ENCODE measurements at regions of chr7 and their contacts with region 1.

Region 1: GRCh38 chr7:44541028-44541869 is at the start of gene NPC1L1:
- DNase-seq: no peak
- ATAC-seq: no peak
- H3K4me3 ChIP-seq: no peak within 1 kb of the TSS
- H3K27ac ChIP-seq: no peak within 1 kb of the TSS
- H3K4me1 ChIP-seq: no peaks in the 10 kb centered on the region
- H3K27me3 ChIP-seq: no peaks in the 10 kb centered on the region
- CTCF ChIP-seq: no peak
- total RNA-seq, gene NPC1L1: 0.24 to 0.28 TPM in 2 of 4 donors, not detected in the others

Region 2: DNA sequence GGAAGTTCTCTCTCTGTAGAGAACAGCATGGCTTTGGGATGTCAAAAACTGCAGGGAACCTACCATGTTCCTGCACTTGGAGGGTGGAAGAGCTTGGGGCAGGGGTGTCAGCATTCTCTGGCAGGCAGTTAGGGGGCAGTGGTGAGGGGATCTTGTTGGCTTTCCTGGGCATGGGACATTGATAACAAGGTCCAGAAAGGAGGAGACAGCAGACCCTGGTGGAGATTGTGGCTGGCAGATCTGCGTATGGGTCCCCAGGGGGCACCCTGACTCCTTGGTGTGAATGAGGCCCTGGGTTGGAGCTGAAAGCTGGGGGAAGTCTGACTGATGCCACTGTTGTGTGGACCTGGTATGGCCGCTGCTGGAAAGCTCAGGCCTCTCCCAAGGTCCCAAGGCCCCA is 192.9 kb before region 1 on chr7:
- intact Hi-C with region 1: loop called in 1 of 2 experiments (anchors 10 kb)
- DNase-seq: no peak
- ATAC-seq: peak in 2 of 4 donors; percentile 46 to 51
- H3K4me3 ChIP-seq: no peak overlapping the region
- H3K27ac ChIP-seq: no peak overlapping the region
- H3K4me1 ChIP-seq: peaks cover 12% of the 10 kb centered on the region
- H3K27me3 ChIP-seq: no peaks in the 10 kb centered on the region
- CTCF ChIP-seq: peak; percentile 7

Measured in psoas muscle (tissue), 8 donors.